Caco-2 (cell line): ENCODE measurements at regions of chr6 and their contacts with region 1.

Region 1: GRCh38 chr6:21180155-21180554 is 413.4 kb upstream of the SOX4 start:
- DNase-seq: no peak
- H3K4me3 ChIP-seq: no peak overlapping the region
- H3K4me3 Mint-ChIP-seq: no peak overlapping the region
- H3K27ac Mint-ChIP-seq: no peak overlapping the region
- H3K4me1 ChIP-seq: no peaks in the 10 kb centered on the region
- H3K4me1 Mint-ChIP-seq: no peaks in the 10 kb centered on the region
- H3K27me3 ChIP-seq: no peaks in the 10 kb centered on the region
- H3K27me3 Mint-ChIP-seq: no peaks in the 10 kb centered on the region
- CTCF ChIP-seq: no peak

Region 2: DNA sequence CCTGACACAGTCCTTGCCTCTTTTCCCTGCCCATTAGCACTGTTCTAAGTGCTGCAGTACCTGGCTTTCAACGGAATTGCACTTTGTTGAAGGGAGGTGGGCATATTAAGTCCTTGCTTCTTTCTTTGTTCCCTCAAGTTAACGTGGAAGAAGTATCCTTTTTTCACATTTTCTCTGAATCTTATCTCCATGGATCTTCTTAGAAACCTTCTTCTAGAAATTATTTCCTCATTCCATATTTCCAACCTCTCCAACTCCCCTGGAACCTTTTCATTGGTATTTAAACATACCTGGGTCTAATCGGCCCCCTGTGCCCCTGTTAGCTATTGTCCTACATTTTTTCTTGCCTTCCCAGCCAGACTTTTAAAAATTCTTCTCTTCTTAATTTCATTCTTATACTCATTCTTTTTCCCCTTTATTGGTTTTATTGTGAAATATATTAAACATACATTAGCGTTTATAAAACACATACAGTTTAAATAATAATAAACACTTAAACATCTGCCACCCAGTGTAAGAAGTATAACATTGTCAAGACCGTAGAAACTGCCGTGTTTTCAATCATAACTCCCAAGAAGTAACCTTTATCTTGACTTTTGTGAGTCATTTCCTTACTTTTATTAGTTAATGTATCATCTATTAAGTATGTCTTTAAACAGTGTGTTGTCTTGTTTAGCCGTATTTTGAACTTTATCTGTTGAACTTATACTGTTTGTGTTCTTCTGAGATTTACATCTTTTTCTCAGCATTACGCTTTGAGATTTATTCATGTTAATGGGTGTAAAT is 527.7 kb before region 1 on chr6:
- CTCF ChIA-PET with region 1: no interaction called
- POLR2A ChIA-PET with region 1: no interaction called
- intact Hi-C with region 1: no loop called
- DNase-seq: no peak
- H3K4me3 ChIP-seq: no peak overlapping the region
- H3K4me3 Mint-ChIP-seq: no peak overlapping the region
- H3K27ac Mint-ChIP-seq: no peak overlapping the region
- H3K4me1 ChIP-seq: no peaks in the 10 kb centered on the region
- H3K4me1 Mint-ChIP-seq: peaks cover 15% of the 10 kb centered on the region
- H3K27me3 ChIP-seq: no peaks in the 10 kb centered on the region
- H3K27me3 Mint-ChIP-seq: no peaks in the 10 kb centered on the region
- CTCF ChIP-seq: no peak

Region 3: DNA sequence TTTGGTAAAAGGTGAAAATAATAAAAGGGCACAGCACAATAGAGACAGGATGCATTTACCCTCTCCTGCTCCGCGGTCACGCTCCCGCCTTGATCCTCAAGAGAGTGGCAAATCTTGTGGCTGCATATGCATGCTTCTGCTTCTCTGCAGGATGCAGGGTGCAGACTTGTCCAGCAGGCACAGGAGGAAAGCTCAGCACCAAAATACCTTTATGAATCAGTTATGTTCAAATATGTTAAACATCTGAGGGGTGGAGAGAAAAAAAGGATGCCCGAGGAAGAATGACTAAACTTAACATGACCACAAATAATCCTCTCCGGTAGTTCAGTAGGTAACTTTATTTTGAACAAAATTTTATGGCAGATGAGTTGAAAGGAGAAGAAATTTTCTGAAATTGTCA is 47.3 kb after region 1 on chr6:
- CTCF ChIA-PET with region 1: no interaction called
- POLR2A ChIA-PET with region 1: interaction called, 10 read pairs
- intact Hi-C with region 1: no loop called
- DNase-seq: no peak
- H3K4me3 ChIP-seq: no peak overlapping the region
- H3K4me3 Mint-ChIP-seq: no peak overlapping the region
- H3K27ac Mint-ChIP-seq: no peak overlapping the region
- H3K4me1 ChIP-seq: no peaks in the 10 kb centered on the region
- H3K4me1 Mint-ChIP-seq: peaks cover 4% of the 10 kb centered on the region
- H3K27me3 ChIP-seq: no peaks in the 10 kb centered on the region
- H3K27me3 Mint-ChIP-seq: no peaks in the 10 kb centered on the region
- CTCF ChIP-seq: no peak